K562 (cell line): ENCODE measurements at regions of chr1 and their contacts with region 1.

Region 1: DNA sequence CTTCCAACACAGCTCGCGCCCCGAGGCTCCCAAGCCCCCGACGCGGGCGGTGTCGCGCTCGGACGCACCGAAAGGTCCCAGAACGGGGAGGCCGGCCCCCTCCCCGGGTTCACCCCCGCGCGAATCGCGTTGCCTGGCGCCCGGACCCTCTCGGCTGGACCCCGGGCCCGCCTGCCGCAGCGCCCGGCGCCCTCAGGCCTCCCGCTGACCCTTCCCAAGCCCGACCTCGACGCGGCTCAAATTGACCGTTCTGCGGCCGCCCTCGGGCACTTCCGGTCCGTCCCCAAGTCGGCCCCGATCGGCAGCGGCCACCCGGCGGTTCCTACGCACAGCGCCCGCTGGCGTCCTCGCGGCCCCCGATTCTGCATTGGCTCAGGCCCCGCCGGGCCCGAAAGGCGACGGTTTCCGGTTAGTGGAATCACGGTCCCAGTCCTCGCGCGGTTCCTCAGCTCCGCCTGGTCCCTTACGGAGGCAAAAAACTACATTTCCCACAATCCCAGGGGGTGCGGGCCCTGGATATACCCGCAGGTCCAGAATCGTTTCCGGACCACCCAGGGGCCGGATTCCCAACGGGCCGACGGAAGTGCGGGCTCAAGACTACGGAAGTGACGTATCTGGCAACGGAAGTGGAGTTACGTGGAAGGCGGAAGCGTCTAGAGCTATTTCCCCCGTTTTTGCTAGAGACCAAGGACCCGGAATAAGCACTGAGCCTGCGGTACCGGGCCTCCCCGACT is at the start of gene AURKAIP1:
- DNase-seq: peak; percentile 95 to 100 (median 98)
- ATAC-seq: peak; percentile 96
- H3K4me3 ChIP-seq: peak within 1 kb of the TSS; percentile 100
- H3K27ac ChIP-seq: peak within 1 kb of the TSS; percentile 97
- H3K4me1 ChIP-seq: peaks cover 16 to 59% of the 10 kb centered on the region in 2 experiments
- H3K27me3 ChIP-seq: no peaks in the 10 kb centered on the region
- CTCF ChIP-seq: peak; percentile 35 to 61 (median 53)
- EP300 ChIP-seq: peak; percentile 67
- POLR2A ChIP-seq: peak; percentile 93
- RAD21 ChIP-seq: peak in 1 of 2 experiments; percentile 18; a peak in 1 of 4 replicates
- polyA plus RNA-seq, gene AURKAIP1: 7.8 to 32.9 TPM

Region 2: DNA sequence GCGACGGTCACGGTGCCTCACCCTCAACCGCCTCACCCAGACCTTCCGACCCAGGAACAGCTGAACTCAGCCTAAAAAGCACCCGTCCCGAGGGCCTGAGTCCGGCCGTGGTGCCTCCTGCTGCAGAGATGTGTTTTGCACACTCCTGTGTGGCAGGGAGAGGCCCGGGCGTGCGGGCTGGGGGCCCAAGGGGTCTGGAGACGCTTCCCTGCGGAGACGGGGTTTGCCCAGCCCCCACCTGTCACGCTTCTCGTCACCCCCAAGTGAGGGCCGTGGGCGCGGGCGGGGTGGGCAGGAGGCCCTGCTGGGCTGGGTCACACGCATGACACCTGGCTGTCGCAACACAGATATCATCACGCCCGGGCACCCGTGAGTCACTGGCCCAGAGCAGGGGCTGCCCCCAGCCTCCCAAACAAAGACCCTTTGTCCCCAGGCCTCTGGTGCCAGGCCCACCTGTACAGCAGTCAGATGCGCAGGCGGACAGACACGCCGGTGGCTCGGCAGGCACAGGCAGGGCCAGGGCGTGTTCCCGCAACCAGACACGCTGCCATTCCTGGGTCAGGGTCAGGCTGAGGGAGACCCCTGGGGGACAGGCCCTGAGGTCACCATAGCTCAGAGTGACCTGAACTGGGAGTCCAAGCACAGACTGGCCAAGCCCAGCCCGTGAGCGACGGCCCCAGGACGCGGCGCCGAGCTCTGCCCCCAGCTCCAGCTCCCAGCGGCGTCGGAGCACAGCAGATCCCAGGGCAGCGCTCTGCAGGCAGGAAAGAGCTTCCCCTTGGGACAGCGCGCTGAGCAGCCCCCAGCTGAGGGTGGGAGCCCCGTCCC is 137.0 kb before region 1 on chr1:
- CTCF ChIA-PET with region 1: no interaction called
- POLR2A ChIA-PET with region 1: no interaction called
- in situ Hi-C with region 1: no loop called
- intact Hi-C with region 1: no loop called
- DNase-seq: no peak
- ATAC-seq: no peak; the same call in 2 of the 3 replicates
- H3K4me3 ChIP-seq: no peak overlapping the region
- H3K27ac ChIP-seq: no peak overlapping the region
- H3K4me1 ChIP-seq: peaks cover 0 to 94% of the 10 kb centered on the region in 2 experiments; a peak in 3 of 5 replicates
- H3K27me3 ChIP-seq: no peaks in the 10 kb centered on the region
- CTCF ChIP-seq: no peak
- EP300 ChIP-seq: no peak
- POLR2A ChIP-seq: no peak
- RAD21 ChIP-seq: no peak

Region 3: DNA sequence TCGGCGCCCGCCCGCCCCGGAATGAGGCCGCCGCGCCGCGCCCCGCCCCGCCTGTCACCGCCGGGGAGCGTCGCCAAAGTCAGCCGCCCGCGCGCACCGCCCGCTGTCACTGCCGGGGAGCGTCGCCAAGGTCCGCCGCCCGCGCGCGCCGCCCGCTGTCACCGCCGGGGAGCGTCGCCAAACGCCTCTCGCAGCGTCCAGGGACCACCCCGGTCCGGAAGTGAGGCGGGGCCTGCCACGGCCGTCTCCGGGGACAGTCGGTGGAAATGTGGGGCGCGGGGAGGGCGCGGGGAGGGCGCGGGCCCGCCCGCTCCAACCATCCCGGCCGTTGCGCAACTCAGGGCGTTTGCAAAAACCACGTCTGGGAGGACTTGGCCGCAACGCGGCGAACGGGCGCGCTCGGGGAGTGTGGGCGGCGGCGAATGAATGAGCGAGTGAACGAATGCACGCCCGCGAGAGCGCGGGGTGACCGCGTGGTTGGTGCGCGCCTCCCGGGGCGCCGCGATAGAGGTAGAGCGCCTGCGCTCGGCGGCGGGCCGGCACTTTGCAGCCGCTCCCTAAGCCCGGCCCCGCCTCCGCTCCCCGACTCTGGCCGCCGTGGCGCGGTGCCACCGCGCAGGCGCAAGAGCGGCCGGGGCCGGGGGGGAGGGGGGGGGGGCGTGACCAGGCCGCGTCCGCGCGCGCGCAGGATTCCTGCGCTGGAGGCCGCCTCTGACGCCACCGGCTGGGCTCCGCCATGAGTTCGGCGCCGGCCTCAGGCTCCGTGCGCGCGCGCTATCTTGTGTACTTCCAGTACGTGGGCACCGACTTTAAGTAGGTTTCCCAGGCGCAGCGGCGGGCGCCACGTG is 67.0 kb before region 1 on chr1 and contains the starts of genes ACAP3 and PUSL1:
- CTCF ChIA-PET with region 1: no interaction called
- POLR2A ChIA-PET with region 1: interaction called, 3 read pairs
- in situ Hi-C with region 1: no loop called
- intact Hi-C with region 1: loop called (anchors 5 kb)
- DNase-seq: peak; percentile 95 to 99 (median 97)
- ATAC-seq: peak; percentile 52
- H3K4me3 ChIP-seq: peak within 1 kb of the TSS; percentile 94
- H3K27ac ChIP-seq: peak within 1 kb of the TSS; percentile 96
- H3K4me1 ChIP-seq: peaks cover 41 to 97% of the 10 kb centered on the region in 2 experiments
- H3K27me3 ChIP-seq: no peaks in the 10 kb centered on the region
- CTCF ChIP-seq: peak in 1 of 3 experiments; percentile 2; a peak in 1 of 6 replicates
- EP300 ChIP-seq: no peak
- POLR2A ChIP-seq: peak; percentile 63
- RAD21 ChIP-seq: no peak
- polyA plus RNA-seq, gene ACAP3: 0.01 to 0.06 TPM
- polyA plus RNA-seq, gene PUSL1: 0.62 to 1.7 TPM

Region 4: DNA sequence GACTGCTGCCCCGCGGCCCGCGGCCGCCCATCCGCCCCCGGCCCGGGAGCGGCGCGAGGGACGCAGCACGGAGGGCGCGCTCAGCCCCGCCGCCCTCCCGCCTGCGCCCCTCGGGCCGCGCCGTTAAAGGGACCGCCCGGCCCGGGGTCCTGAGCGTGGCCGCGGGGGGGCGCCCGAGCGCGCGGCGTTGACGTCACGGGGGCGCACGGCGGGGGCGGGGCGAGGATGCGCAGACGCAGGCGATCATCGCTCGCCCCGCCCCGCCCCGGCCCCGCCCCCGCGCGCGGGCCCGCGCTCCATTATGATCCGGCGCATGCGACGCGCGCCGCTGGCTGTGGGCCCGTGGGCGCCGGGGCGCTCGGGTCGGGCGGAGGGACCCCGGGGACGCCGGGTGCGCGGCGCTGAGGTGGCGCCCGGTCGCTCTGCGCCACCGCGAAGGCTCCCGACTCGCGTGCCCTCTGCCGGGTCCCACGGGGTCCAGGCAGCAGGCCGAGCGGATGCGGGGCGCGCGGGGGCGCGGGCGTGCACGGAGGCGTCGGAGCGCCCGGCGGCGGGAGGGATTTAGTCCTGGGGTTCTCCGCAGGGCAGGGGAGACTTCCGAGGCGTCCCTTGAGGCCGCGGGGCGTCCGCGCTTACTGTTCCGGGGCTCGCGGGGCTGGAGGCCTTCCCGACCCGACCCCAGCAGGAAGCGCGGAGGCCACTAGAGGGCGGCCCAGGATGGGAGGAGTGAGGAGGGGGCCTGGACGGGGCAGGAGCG is 25.7 kb before region 1 on chr1 and contains the start of gene DVL1:
- CTCF ChIA-PET with region 1: interaction called, 5 read pairs
- POLR2A ChIA-PET with region 1: interaction called, 22 read pairs
- in situ Hi-C with region 1: no loop called
- intact Hi-C with region 1: loop called (anchors 2 kb)
- DNase-seq: peak; percentile 82 to 93 (median 89)
- ATAC-seq: peak; percentile 62
- H3K4me3 ChIP-seq: peak within 1 kb of the TSS; percentile 98
- H3K27ac ChIP-seq: peak within 1 kb of the TSS; percentile 96
- H3K4me1 ChIP-seq: peaks cover 14 to 82% of the 10 kb centered on the region in 2 experiments; a peak in 3 of 5 replicates
- H3K27me3 ChIP-seq: no peaks in the 10 kb centered on the region
- CTCF ChIP-seq: peak; percentile 46 to 75 (median 57); a peak in 5 of 6 replicates
- EP300 ChIP-seq: no peak
- POLR2A ChIP-seq: no peak; the same call in 1 of the 2 replicates
- RAD21 ChIP-seq: peak; percentile 43 to 56; a peak in 3 of 4 replicates
- polyA plus RNA-seq, gene DVL1: 0.62 to 0.63 TPM

Region 5: GRCh38 chr1:1399187-1399871 is 24.2 kb after region 1 on chr1 and contains the start of gene CCNL2:
- CTCF ChIA-PET with region 1: no interaction called
- POLR2A ChIA-PET with region 1: interaction called, 41 read pairs
- in situ Hi-C with region 1: no loop called
- intact Hi-C with region 1: loop called (anchors 1 kb)
- DNase-seq: peak; percentile 96 to 100 (median 98)
- ATAC-seq: peak; percentile 96
- H3K4me3 ChIP-seq: peak within 1 kb of the TSS; percentile 100
- H3K27ac ChIP-seq: peak within 1 kb of the TSS; percentile 98
- H3K4me1 ChIP-seq: peaks cover 19 to 46% of the 10 kb centered on the region in 2 experiments
- H3K27me3 ChIP-seq: no peaks in the 10 kb centered on the region
- CTCF ChIP-seq: peak; percentile 67 to 76 (median 71)
- EP300 ChIP-seq: peak; percentile 34; the same call in 1 of the 2 replicates
- POLR2A ChIP-seq: peak; percentile 92
- RAD21 ChIP-seq: no peak; a peak in 2 of 4 replicates
- polyA plus RNA-seq, gene CCNL2: 2.8 to 5.6 TPM

Region 6: DNA sequence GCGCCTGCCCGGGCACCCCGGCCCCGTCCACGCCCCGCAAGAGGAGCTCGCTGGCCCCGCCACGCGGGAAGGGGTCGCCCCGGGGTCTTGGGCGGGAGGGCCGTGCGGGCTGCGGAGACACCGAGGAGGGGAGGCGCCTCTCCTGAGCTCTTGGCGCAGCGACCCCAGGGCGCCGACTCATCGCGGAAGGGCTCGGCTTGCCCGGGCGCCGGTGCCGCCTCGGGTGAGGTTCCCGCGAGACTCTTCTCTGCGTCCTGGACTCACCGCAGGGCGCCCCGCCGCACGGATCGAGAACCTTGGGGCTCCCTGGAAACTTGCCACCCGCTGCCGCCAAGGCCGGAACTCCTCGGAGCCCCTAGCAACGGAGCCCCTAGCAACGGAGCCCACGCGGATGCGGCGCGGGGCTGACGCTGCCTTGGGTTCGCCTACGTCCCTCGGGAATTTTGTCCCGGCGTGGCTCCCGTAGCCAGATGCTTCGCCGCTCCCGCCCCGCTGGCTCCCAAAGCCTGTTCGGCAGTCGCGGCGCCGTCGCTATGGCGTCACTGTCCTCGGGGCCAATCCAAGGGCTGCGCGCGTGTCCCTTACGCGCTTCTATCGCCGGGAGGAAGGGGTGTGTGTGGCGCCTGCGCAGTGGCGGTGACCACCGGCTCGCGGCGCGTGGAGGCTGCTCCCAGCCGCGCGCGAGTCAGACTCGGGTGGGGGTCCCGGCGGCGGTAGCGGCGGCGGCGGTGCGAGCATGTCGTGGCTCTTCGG is 136.6 kb after region 1 on chr1 and contains the start of gene ATAD3A:
- CTCF ChIA-PET with region 1: no interaction called
- POLR2A ChIA-PET with region 1: interaction called, 5 read pairs
- in situ Hi-C with region 1: no loop called
- intact Hi-C with region 1: loop called (anchors 10 kb)
- DNase-seq: peak; percentile 93 to 100 (median 96)
- ATAC-seq: peak; percentile 96
- H3K4me3 ChIP-seq: peak within 1 kb of the TSS; percentile 93
- H3K27ac ChIP-seq: peak within 1 kb of the TSS; percentile 91
- H3K4me1 ChIP-seq: peaks cover 0 to 19% of the 10 kb centered on the region in 2 experiments; a peak in 2 of 5 replicates
- H3K27me3 ChIP-seq: no peaks in the 10 kb centered on the region
- CTCF ChIP-seq: peak in 1 of 3 experiments; percentile 7; a peak in 1 of 6 replicates
- EP300 ChIP-seq: no peak
- POLR2A ChIP-seq: peak; percentile 92
- RAD21 ChIP-seq: no peak
- polyA plus RNA-seq, gene ATAD3A: 0.10 to 1.0 TPM

Region 7: GRCh38 chr1:1577367-1578011 is 202.4 kb after region 1 on chr1:
- CTCF ChIA-PET with region 1: no interaction called
- POLR2A ChIA-PET with region 1: no interaction called
- in situ Hi-C with region 1: no loop called
- intact Hi-C with region 1: no loop called
- DNase-seq: no peak
- ATAC-seq: no peak
- H3K4me3 ChIP-seq: no peak overlapping the region
- H3K27ac ChIP-seq: no peak overlapping the region
- H3K4me1 ChIP-seq: peaks cover 15 to 35% of the 10 kb centered on the region in 2 experiments; a peak in 4 of 5 replicates
- H3K27me3 ChIP-seq: peaks cover 0 to 18% of the 10 kb centered on the region in 2 experiments; a peak in 3 of 5 replicates
- CTCF ChIP-seq: no peak
- EP300 ChIP-seq: no peak
- POLR2A ChIP-seq: no peak
- RAD21 ChIP-seq: no peak